ENCODE measurements at regions of chr7 and their contacts with region 1.

Region 1: GRCh38 chr7:156892821-156893706 is at the start of gene LMBR1:
- DNase-seq: peak; percentile 98
- ATAC-seq: peak; percentile 86
- H3K4me3 Mint-ChIP-seq: peak within 1 kb of the TSS; percentile 91
- H3K27ac Mint-ChIP-seq: peak within 1 kb of the TSS; percentile 88
- H3K4me1 Mint-ChIP-seq: peaks cover 42% of the 10 kb centered on the region
- H3K27me3 Mint-ChIP-seq: no peaks in the 10 kb centered on the region
- CTCF ChIP-seq: no peak
- total RNA-seq, gene LMBR1: 54.6 and 67.9 TPM in 2 replicates

Region 2: DNA sequence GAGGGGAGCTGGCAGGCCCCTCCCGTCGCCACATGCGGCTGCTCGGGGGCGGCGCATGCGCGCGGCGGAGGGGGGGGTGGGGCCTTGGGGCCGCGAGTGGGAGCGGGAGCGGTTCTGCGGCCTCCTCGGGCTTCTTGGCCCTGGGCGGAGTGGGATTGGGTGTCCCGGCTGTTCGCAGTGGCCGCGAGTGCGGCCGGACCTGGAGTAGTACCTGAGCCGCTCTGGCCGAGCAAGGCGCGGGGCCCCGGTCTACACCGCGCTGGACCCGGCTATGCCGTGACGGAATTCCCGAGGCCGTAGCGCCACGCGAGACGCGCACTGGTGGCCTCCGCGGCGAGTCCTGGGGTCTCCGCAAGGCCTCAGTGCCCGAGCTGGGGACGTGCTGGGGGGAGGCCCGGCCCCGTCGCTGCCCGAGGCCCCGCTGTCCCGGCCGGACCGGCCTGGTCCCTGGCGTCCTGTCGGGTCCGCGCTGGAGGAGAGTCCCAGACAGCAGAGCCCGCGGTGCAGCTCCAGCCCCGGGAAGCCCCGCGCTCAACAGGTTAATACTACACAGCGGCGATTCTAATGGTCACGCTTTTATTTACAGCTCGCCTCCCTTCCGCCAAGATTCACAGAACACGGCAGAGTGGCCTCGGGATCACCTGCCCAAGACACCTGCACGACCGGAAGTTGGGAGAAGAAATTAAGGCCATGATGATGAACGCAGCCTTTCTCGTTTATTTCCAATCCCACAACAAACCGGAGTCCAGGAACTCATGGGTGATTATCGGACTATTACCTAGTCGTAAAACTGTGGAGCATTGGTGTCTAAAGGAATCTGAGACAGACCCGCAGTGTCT is 1889.5 kb before region 1 on chr7:
- CTCF ChIA-PET with region 1: no interaction called
- POLR2A ChIA-PET with region 1: no interaction called
- intact Hi-C with region 1: loop called (anchors 1 kb)
- DNase-seq: no peak
- ATAC-seq: peak; percentile 86
- H3K4me3 Mint-ChIP-seq: peak overlapping the region; percentile 92
- H3K27ac Mint-ChIP-seq: peak overlapping the region; percentile 83
- H3K4me1 Mint-ChIP-seq: peaks cover 19% of the 10 kb centered on the region
- H3K27me3 Mint-ChIP-seq: no peaks in the 10 kb centered on the region
- CTCF ChIP-seq: no peak

Region 3: DNA sequence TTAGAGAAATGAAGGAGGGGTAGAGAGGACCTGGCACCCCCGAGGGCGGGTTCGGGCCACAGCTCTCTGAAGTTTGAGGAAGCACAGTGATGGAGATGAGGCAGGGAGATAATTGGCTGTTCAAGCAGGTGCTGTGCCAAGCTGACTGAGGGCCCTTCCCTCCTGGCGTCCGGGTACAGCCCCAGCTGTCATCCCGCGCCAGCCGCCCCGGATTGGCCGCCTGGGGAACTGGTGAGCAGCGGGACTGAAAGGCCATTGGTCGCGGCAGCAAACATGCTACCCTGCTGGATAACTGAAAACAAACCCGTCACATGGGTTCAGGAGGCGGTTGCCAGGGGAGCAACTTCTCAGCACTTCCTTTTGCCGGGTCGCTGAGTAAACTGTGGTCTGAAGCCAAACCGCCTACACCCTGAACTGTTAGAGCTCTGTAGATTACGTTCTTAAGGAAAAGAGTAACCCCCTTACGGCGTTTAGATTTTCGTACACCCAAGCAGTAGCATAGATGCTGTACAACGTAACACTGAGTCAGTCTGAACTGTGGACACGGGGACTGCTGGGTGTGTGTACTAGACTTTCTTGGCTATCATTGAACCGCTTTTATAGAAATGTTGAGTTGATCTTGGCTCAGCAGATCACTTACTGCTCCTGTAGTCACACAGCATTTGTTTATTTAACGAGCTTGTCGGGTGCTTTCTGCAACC is 1594.1 kb before region 1 on chr7:
- CTCF ChIA-PET with region 1: no interaction called
- POLR2A ChIA-PET with region 1: interaction called, 6 read pairs
- intact Hi-C with region 1: loop called (anchors 1 kb)
- DNase-seq: peak; percentile 86
- ATAC-seq: peak; percentile 72
- H3K4me3 Mint-ChIP-seq: peak overlapping the region; percentile 94
- H3K27ac Mint-ChIP-seq: peak overlapping the region; percentile 94
- H3K4me1 Mint-ChIP-seq: peaks cover 42% of the 10 kb centered on the region
- H3K27me3 Mint-ChIP-seq: no peaks in the 10 kb centered on the region
- CTCF ChIP-seq: no peak

Region 4: GRCh38 chr7:155815332-155816191 is 1077.5 kb before region 1 on chr7:
- CTCF ChIA-PET with region 1: no interaction called
- POLR2A ChIA-PET with region 1: interaction called, 14 read pairs
- intact Hi-C with region 1: no loop called
- DNase-seq: peak; percentile 46
- ATAC-seq: peak; percentile 82
- H3K4me3 Mint-ChIP-seq: peak overlapping the region; percentile 49
- H3K27ac Mint-ChIP-seq: no peak overlapping the region
- H3K4me1 Mint-ChIP-seq: peaks cover 11% of the 10 kb centered on the region
- H3K27me3 Mint-ChIP-seq: peaks cover 55% of the 10 kb centered on the region
- CTCF ChIP-seq: no peak

Region 5: GRCh38 chr7:156751319-156751718 is 141.7 kb before region 1 on chr7:
- CTCF ChIA-PET with region 1: no interaction called
- POLR2A ChIA-PET with region 1: no interaction called
- intact Hi-C with region 1: no loop called
- DNase-seq: no peak
- ATAC-seq: no peak
- H3K4me3 Mint-ChIP-seq: no peak overlapping the region
- H3K27ac Mint-ChIP-seq: no peak overlapping the region
- H3K4me1 Mint-ChIP-seq: no peaks in the 10 kb centered on the region
- H3K27me3 Mint-ChIP-seq: no peaks in the 10 kb centered on the region
- CTCF ChIP-seq: no peak

Region 6: DNA sequence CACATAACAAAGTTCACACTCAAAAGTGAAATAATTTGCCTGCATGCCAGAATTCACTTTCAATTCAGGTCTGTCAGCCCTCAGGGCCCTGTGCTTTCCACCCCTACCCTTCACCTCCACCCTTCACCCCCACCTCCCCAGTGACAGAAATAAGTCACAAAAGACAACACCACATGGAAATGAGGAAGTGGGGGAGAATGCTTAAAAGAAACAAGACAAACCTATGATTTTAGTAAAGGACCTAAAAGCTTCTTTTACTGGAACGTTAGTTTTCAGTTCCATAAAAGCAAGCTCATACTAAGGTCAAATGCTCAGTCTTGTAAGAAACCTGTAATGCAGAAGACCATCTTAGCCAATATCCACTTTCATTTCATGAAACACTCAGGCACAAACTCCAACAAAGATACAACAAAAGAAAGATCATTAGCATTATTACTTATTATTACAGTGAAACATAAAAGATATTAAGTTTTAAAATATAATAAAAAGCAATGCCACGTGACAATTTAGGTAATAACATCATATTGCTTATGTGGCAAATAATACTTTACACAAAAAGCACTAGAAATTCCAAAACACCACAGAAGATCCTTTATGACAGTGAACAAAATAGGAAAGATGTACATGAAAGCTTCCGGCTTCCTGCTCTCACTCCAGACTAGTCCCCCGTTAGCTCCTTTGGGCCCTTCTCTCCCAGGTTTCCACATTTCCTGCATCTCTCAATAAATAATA is 112.2 kb before region 1 on chr7:
- CTCF ChIA-PET with region 1: no interaction called
- POLR2A ChIA-PET with region 1: no interaction called
- intact Hi-C with region 1: loop called (anchors 5 kb)
- DNase-seq: no peak
- ATAC-seq: peak; percentile 97
- H3K4me3 Mint-ChIP-seq: peak overlapping the region; percentile 35
- H3K27ac Mint-ChIP-seq: peak overlapping the region; percentile 78
- H3K4me1 Mint-ChIP-seq: peaks cover 38% of the 10 kb centered on the region
- H3K27me3 Mint-ChIP-seq: no peaks in the 10 kb centered on the region
- CTCF ChIP-seq: no peak

Region 7: DNA sequence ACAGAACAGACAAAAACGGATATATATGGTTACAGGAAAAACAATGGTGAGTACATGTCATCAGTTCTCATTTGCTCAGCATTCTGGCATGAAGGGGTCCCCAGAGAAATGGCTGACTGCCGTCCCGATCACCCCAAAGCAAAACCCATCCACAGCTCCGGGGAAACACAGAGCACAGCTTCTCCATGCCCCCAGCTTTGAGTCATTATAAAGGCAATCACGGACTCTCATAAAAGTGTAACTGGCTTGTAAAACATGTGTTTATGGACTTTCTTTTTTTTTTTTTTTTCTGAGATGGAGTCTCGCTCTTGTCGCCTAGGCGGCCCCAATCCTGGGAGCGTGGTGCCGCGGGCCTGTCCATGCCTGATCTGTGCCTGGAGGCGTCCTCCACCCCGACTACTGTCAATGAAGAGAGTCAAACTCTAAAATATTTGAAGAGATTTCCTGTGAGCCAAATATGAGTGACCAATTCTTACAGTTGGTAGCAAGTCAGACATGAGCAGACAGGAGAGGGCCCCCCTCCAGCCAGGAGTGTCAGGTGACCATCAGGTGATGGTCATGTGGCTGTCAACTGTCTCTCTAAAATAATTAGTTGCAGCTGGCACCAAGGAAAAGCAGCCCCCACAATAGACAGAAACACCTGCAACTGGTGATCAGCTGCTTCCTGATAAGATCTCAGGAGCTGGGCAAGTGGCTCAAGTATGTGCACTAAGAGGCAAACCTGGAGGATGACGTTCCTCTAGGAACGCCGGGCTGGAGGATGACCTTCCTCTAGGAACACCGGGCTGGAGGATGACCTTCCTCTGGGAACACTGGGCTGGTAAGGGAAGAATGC is 34.7 kb after region 1 on chr7:
- CTCF ChIA-PET with region 1: no interaction called
- POLR2A ChIA-PET with region 1: interaction called, 4 read pairs
- intact Hi-C with region 1: loop called (anchors 2 kb)
- DNase-seq: no peak
- ATAC-seq: no peak
- H3K4me3 Mint-ChIP-seq: no peak overlapping the region
- H3K27ac Mint-ChIP-seq: no peak overlapping the region
- H3K4me1 Mint-ChIP-seq: peaks cover 5% of the 10 kb centered on the region
- H3K27me3 Mint-ChIP-seq: peaks cover 13% of the 10 kb centered on the region
- CTCF ChIP-seq: no peak

Region 8: DNA sequence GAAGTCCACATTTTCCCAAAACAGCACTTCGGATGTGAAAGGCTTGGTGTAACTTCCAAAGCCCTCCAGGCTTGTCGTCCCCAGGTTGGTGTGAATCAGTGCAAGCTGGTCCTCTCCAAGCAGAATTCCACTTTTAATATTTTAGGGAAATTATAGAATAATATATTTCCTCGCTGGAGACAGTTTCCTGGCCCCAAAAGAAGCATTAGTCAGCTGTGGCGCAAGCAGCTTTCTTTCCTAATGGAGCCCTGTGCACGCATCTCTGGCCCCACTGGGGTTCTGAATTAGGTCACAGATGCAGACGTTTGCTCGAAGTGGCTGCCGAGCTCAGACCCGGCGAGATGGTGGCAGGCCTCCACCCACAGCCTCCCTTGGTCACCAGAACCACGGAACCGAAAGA is 150.7 kb after region 1 on chr7:
- CTCF ChIA-PET with region 1: no interaction called
- POLR2A ChIA-PET with region 1: no interaction called
- intact Hi-C with region 1: no loop called
- DNase-seq: no peak
- ATAC-seq: no peak
- H3K4me3 Mint-ChIP-seq: no peak overlapping the region
- H3K27ac Mint-ChIP-seq: no peak overlapping the region
- H3K4me1 Mint-ChIP-seq: no peaks in the 10 kb centered on the region
- H3K27me3 Mint-ChIP-seq: peaks cover 8% of the 10 kb centered on the region
- CTCF ChIP-seq: no peak

Region 9: DNA sequence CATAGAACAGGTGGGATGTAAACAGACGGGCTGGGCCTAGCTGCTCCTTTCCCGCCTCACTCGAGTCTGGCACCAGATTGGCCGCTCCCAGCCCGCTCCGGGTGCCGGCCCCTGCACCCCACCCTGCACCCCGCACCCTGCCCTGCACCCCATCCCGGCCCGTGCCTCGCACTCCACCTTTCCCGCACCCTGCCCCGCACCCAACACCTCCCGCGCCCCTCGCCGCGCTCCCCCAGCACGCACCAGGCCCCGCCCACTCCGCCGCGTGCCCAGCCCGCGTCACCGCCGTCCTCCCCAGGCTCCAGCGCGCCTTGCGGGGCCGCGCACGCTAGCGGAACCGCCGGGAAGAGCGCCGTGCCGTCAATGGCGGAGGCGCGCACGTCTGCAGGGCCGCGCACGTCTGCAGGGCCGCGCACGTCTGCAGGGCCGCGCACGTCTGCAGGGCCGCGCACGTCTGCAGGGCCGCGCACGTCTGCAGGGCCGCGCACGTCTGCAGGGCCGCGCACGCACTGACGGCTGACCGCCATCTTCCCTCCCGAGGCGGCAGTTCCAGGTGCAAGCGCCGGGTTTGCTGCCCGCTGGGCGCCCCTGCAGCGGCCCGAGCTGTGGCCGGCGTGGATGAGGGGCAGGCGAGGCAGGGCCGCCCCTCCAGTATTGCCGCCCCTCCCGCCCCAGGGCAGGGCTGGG is 245.5 kb after region 1 on chr7 and contains the start of gene UBE3C:
- CTCF ChIA-PET with region 1: no interaction called
- POLR2A ChIA-PET with region 1: no interaction called
- intact Hi-C with region 1: loop called (anchors 1 kb)
- DNase-seq: peak; percentile 91
- ATAC-seq: peak; percentile 89
- H3K4me3 Mint-ChIP-seq: peak within 1 kb of the TSS; percentile 81
- H3K27ac Mint-ChIP-seq: peak within 1 kb of the TSS; percentile 88
- H3K4me1 Mint-ChIP-seq: peaks cover 37% of the 10 kb centered on the region
- H3K27me3 Mint-ChIP-seq: no peaks in the 10 kb centered on the region
- CTCF ChIP-seq: no peak
- total RNA-seq, gene UBE3C: 52.8 and 65.3 TPM in 2 replicates